ENCODE measurements at regions of chr3 and their contacts with region 1.

Region 1: DNA sequence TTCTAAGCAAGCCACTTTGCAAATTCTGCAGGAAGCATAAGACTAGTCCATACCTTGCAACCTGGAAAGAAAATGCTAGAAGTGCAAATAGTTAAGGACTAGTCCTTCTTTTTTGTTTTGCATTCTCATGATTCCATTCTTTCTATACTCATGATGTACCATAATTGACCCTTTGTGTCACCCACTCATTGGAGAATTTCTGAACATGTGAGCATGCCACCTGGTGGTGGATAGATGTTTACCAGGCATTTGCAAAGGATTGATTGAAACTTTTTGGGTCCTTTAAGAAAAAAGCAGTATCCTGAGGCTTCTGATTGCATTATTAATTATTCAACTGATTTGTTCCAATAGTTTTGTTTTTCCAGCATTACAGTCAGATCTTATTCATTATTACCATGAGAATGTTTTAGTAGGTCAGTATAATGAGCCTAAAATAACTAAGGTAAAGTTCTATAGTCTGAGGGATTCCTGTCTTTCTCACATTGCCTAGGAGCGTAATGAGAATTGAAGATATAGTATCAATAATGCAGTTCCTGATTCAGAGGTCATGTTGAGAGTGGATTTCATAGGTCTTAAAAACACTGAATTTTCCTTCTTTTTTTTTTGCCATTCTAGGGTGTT is 20.2 kb upstream of the DIPK2A start:
- DNase-seq: peak in 2 of 10 donors; percentile 22 to 32

Region 2: GRCh38 chr3:143585720-143586456 is 365.6 kb before region 1 on chr3:
- intact Hi-C with region 1: no loop called
- DNase-seq: no peak

Region 3: DNA sequence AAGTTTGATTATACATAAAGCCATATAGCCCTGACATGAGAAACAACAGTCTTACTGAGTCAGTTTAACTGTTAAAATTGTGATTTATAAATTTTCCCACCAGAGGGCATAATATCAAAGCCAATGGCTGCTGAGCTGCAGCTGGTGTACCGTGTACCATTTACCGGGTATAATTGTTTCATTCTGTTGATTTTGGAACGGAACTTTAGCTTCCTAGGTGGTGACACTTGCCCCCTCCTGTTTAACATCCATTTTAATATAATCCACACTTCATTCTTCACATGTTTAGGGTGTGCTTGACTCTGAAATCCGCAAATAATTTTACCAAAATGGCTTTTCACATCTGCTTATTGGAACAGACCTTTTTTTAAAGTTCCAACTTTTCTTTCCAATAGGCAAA is 176.0 kb before region 1 on chr3:
- intact Hi-C with region 1: loop called (anchors 1 kb)
- DNase-seq: no peak

Region 4: DNA sequence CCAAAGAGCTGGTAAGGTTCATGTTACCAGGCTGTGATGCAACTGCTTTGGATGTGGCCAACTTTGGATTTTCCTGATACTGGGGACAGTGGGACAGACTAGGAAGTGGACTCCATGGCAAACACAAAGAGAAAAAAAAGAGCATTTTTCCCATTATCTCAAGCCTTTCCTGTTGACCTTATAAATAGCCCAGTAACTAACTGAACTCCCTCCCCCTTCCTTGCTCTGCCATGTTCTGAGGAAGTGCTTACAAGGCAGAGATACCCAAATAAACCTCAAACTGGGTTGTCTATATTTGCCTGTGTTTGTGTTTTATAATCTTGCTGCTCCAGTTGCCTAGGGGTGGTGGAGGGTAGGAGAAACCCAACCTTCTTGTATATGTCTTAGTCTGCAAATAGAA is 75.9 kb before region 1 on chr3:
- intact Hi-C with region 1: no loop called
- DNase-seq: no peak

Region 5: DNA sequence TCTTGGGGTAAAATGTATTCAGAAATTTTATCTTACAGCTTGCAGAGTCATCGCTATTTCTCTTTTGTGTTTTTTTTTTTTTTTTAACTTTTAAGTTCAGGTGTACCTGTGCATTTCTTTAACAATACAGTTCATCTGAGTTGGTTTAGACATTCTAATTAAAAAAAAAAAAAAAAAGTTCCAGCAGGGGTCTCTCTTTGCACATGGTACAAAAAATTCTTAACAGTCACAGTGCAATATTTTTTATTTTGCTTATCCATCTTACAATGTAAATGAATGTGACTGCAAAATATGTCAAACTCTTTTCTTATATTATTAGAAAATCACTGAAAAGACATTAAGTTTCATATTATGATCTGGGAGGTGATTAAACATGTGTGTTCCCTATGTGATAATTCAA is 55.7 kb before region 1 on chr3:
- intact Hi-C with region 1: loop called (anchors 1 kb)
- DNase-seq: no peak